ENCODE measurements at regions of chr13 and their contacts with region 1.

Region 1: GRCh38 chr13:59391696-59392095 is 772.0 kb downstream of the DIAPH3 start:
- DNase-seq: peak in 1 of 2 experiments; percentile 53
- H3K4me3 ChIP-seq: no peak overlapping the region
- H3K27ac ChIP-seq: no peak overlapping the region
- H3K4me1 ChIP-seq: no peaks in the 10 kb centered on the region
- H3K27me3 ChIP-seq: no peaks in the 10 kb centered on the region
- CTCF ChIP-seq: peak; percentile 6 to 82 (median 81)
- EP300 ChIP-seq: no peak
- POLR2A ChIP-seq: no peak
- RAD21 ChIP-seq: peak; percentile 91 to 95

Region 2: DNA sequence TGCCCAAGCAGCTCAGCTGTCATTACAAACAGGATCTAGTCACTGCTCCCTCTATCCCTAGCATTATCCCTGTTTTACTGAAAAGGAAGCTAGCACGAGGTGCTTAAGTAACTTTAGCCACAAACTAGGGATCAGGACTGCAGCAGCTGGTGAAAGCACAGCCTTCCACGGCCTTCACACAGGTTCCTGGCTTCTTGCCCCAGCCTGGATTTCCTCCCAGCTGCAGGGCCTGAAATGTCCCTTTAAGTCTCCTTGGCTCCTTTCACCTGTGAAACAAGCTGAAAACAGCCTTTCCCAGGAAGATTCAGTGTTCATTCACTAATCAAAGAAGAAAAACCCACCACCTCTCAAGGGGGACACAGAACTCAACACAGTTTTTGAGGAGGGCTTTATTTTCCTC is 17.5 kb after region 1 on chr13:
- CTCF ChIA-PET with region 1: interaction called, 15 read pairs
- POLR2A ChIA-PET with region 1: interaction called, 4 read pairs
- DNase-seq: peak in 1 of 2 experiments; percentile 53
- H3K4me3 ChIP-seq: no peak overlapping the region; a peak in 1 of 8 replicates
- H3K27ac ChIP-seq: peak overlapping the region; percentile 78
- H3K4me1 ChIP-seq: peaks cover 0 to 23% (median 16%) of the 10 kb centered on the region in 4 experiments; a peak in 5 of 7 replicates
- H3K27me3 ChIP-seq: no peaks in the 10 kb centered on the region; a peak in 2 of 7 replicates
- CTCF ChIP-seq: no peak
- EP300 ChIP-seq: no peak
- POLR2A ChIP-seq: no peak
- RAD21 ChIP-seq: no peak

Region 3: GRCh38 chr13:59452189-59452890 is 60.6 kb after region 1 on chr13:
- CTCF ChIA-PET with region 1: interaction called, 10 read pairs
- POLR2A ChIA-PET with region 1: no interaction called
- DNase-seq: no peak
- H3K4me3 ChIP-seq: no peak overlapping the region
- H3K27ac ChIP-seq: no peak overlapping the region
- H3K4me1 ChIP-seq: peaks cover 4 to 21% (median 14%) of the 10 kb centered on the region in 4 experiments; a peak in 6 of 7 replicates
- H3K27me3 ChIP-seq: no peaks in the 10 kb centered on the region; a peak in 1 of 7 replicates
- CTCF ChIP-seq: no peak
- EP300 ChIP-seq: no peak
- POLR2A ChIP-seq: no peak
- RAD21 ChIP-seq: no peak

Region 4: DNA sequence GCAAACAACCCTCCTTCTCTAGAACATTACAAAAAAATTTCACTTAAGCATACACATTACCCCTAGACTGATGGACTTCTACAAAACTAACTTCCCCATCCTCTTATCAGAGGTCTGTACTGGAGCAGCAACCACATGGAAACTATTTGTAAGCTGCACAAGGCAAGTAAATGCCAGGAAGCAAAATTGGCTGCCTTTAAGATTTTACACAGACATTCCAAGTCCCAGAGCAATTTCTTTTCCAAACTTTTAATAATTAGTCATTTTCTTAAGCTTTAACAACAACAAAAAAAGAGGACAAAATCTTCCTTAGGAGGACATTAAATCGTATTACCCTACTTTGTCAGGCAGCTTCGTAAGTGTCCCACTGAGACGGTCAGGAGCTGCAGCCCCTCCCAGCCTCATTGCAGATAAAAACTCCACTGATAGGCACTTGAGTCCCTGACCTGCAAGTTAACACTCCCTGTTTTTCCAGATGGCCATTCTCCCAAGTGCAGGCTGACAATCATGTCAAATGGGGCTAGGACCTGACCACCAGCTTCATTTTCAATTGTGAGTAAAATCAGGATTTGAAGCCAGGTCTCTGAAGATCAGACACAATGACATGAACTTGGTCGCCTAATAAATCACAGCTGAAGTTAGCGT is 91.9 kb after region 1 on chr13:
- CTCF ChIA-PET with region 1: interaction called, 18 read pairs
- POLR2A ChIA-PET with region 1: no interaction called
- DNase-seq: no peak
- H3K4me3 ChIP-seq: no peak overlapping the region
- H3K27ac ChIP-seq: no peak overlapping the region
- H3K4me1 ChIP-seq: peaks cover 0 to 19% (median 15%) of the 10 kb centered on the region in 4 experiments; a peak in 5 of 7 replicates
- H3K27me3 ChIP-seq: no peaks in the 10 kb centered on the region
- CTCF ChIP-seq: no peak
- EP300 ChIP-seq: no peak
- POLR2A ChIP-seq: no peak
- RAD21 ChIP-seq: no peak

Region 5: DNA sequence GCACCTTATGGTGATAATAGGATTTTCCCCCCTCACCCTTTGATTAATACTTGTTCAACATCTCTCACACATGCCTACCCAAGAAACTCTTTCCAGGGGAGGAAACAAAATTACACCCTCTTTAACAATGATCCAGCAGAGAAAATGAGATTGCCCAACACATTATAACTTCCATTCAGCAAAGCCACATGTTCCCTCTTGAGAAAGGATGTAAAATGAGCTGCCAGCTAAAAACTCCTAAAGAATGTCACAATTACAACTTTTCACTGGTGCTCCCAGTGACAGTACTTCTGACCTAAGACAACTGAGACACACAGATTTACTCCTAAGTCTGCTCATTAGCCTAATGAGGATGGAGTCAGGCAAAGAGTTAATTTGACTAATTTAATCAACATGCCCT is 150.6 kb after region 1 on chr13:
- CTCF ChIA-PET with region 1: interaction called, 39 read pairs
- POLR2A ChIA-PET with region 1: no interaction called
- DNase-seq: no peak
- H3K4me3 ChIP-seq: no peak overlapping the region
- H3K27ac ChIP-seq: no peak overlapping the region
- H3K4me1 ChIP-seq: peaks cover 0 to 2% (median 0%) of the 10 kb centered on the region in 4 experiments; a peak in 2 of 7 replicates
- H3K27me3 ChIP-seq: no peaks in the 10 kb centered on the region
- CTCF ChIP-seq: no peak
- EP300 ChIP-seq: no peak
- POLR2A ChIP-seq: no peak
- RAD21 ChIP-seq: no peak

Region 6: DNA sequence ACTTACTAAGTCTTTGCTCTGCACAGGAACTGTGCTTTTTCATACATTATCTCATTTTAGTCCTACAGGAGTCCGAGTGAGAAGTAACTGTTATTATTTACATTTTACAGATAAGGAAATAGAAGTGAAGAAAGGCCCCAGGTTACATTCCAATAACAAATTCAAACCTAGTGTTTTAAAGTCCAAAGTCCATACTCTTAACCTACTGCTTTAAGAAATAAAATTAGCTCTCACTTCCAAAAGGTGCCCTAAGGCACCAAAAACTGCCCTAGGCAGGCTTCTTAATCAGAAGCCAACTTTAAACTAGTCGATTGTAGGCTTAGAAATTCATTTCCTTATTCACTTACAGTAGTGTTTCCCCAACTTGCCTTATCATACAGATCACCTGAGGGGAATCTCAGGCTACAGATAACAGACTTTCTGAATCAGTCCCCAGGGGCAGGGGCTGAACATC is 216.1 kb after region 1 on chr13:
- CTCF ChIA-PET with region 1: interaction called, 10 read pairs
- POLR2A ChIA-PET with region 1: no interaction called
- DNase-seq: no peak
- H3K4me3 ChIP-seq: no peak overlapping the region
- H3K27ac ChIP-seq: no peak overlapping the region
- H3K4me1 ChIP-seq: 0 out of 7 replicates have a peak, but pooled peaks cover 0 to 2% (median 0%) of the 10 kb centered on the region in 4 experiments
- H3K27me3 ChIP-seq: no peaks in the 10 kb centered on the region; a peak in 1 of 7 replicates
- CTCF ChIP-seq: no peak
- EP300 ChIP-seq: no peak
- POLR2A ChIP-seq: no peak
- RAD21 ChIP-seq: no peak